ENCODE measurements at regions of chr16 and their contacts with region 1.

Region 1: DNA sequence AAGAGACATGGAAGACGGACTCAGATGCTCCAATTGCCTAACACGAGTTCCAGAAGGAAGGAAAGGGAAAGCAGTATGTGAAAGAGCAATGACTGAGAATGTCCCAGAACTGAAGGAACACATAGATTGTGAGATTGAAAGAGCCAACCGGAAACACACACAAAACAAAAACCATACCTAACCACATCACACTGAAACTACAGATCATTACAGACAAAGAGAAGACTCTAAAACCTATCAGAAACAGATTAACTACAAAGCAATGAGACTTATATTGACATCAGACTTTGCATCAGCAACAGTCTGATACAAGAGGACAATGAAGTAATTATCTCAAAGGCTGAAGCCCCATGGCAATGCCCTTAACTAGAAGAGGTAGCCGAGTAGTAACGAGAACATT is 45.6 kb upstream of the CLEC18B start:
- DNase-seq: no peak
- ATAC-seq: peak; percentile 88
- H3K4me3 Mint-ChIP-seq: no peak overlapping the region
- H3K27ac Mint-ChIP-seq: peak overlapping the region; percentile 43
- H3K4me1 Mint-ChIP-seq: peaks cover 24% of the 10 kb centered on the region
- H3K27me3 Mint-ChIP-seq: no peaks in the 10 kb centered on the region

Region 2: DNA sequence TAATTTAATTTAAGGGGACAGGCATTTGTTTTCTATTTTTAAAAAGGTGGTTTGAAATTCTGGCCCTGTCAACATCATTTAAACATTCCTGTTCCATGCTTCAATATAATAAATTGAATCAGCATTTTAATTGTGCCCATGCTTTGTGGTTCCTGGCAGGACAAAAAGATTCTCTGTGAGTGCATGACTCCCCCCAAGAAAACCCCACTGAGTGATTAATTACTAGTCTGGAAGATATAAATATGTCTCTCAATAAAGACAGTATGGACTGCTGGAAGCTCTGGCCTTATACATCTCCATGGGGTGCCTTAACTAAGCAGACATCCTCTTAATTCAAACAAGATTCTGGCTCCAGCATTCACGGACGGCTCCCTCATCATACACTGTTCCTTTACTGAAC is 265.3 kb before region 1 on chr16:
- CTCF ChIA-PET with region 1: no interaction called
- POLR2A ChIA-PET with region 1: no interaction called
- intact Hi-C with region 1: no loop called
- DNase-seq: no peak
- ATAC-seq: no peak
- H3K4me3 Mint-ChIP-seq: no peak overlapping the region
- H3K27ac Mint-ChIP-seq: no peak overlapping the region
- H3K4me1 Mint-ChIP-seq: no peaks in the 10 kb centered on the region
- H3K27me3 Mint-ChIP-seq: no peaks in the 10 kb centered on the region

Region 3: DNA sequence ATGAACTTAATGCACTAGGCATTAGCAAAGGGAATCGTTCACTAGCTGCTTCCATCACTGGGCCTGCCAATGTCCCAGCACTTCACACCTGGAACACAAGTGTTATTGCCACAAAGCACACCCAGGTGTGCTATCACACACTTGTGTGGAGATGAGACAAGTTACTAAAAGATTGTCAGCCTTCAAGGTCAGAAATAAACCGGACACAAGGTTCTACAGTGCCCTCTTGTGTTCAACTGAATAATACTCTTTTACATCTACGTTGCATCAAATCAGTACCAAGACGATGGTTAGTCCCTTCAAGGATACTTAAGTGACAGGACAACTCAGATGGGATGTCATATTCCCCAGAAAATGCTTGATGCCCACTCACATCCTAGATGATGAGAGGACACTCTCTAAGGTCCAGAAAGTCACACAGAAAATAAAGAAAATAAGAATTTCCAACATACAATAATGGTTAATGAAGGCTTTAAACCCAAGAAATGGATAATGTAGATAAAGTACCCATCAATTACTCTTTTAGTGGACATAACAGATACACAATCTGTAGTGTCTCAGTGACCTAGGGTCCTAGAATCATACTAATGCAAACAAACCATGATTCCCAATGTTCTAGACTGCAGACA is 156.5 kb after region 1 on chr16:
- CTCF ChIA-PET with region 1: no interaction called
- POLR2A ChIA-PET with region 1: no interaction called
- intact Hi-C with region 1: loop called (anchors 2 to 10 kb)
- DNase-seq: no peak
- ATAC-seq: no peak
- H3K4me3 Mint-ChIP-seq: no peak overlapping the region
- H3K27ac Mint-ChIP-seq: no peak overlapping the region
- H3K4me1 Mint-ChIP-seq: peaks cover 33% of the 10 kb centered on the region
- H3K27me3 Mint-ChIP-seq: no peaks in the 10 kb centered on the region

Measured in activated CD4-positive, alpha-beta T cell treated with anti-CD3 and anti-CD28 coated beads for 36 hours (primary cell).